Right ventricle myocardium inferior (tissue), 1 donor: ENCODE measurements at regions of chr11 and their contacts with region 1.

Region 1: GRCh38 chr11:128884703-128885338 is 6.3 kb upstream of the KCNJ5 start:
- DNase-seq: no peak
- ATAC-seq: peak; percentile 80

Region 2: GRCh38 chr11:128905345-128906184 is 20.7 kb after region 1 on chr11:
- intact Hi-C with region 1: loop called (anchors 2 kb)
- DNase-seq: no peak
- ATAC-seq: peak; percentile 53

Region 3: GRCh38 chr11:128956401-128957201 is 71.8 kb after region 1 on chr11:
- intact Hi-C with region 1: loop called (anchors 1 kb)
- DNase-seq: no peak
- ATAC-seq: peak; percentile 69

Region 4: GRCh38 chr11:129100193-129100592 is 215.4 kb after region 1 on chr11:
- intact Hi-C with region 1: no loop called
- DNase-seq: no peak
- ATAC-seq: no peak